Vagina (tissue), 2 donors: ENCODE measurements at regions of chr2 and their contacts with region 1.

Region 1: DNA sequence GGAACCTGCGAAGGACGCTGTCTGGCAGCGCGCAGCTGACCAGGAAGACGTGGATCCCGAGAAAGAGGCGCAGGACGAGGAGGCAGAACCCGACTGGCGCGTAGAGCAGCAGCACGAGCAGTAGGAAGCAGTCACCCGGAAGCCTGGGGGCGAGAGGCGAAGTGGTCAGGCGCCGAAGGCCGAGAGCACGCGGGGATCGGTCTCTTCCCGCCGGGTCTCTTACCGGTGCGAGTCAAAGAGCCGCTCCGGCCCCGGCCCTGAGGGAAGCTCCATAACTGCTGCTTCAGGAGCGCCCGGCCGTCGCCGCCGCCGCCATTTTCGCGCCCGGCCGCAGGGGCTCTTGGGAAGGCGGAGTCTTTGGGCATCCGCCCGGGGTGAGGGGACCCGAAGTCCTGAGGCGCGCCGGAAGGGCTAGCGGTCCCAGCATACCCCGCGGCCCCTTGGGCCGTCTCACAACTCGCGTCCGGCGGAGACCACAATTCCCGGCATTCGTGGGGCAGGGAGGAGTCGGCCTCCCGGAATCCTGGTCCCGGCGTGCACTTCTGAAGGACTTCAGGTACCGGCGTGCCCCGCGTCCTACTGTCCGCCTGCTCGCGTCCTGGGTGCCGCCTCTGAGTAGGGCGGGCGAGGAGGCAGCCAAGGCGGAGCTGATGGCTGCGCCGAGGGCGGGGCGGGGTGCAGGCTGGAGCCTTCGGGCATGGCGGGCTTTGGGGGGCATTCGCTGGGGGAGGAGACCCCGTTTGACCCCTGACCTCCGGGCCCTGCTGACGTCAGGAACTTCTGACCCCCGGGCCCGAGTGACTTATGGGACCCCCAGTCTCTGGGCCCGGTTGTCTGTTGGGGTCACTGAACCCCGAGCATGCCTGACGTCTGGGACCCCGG is at the starts of genes AUP1 and HTRA2:
- DNase-seq: peak in 1 of 2 donors; percentile 99
- H3K4me3 ChIP-seq: peak within 1 kb of the TSS; percentile 87 to 88
- H3K27ac ChIP-seq: peak within 1 kb of the TSS; percentile 85
- H3K4me1 ChIP-seq: peaks cover 33% of the 10 kb centered on the region
- H3K27me3 ChIP-seq: no peaks in the 10 kb centered on the region
- CTCF ChIP-seq: no peak
- POLR2A ChIP-seq: peak in 1 of 2 donors; percentile 64
- total RNA-seq, gene AUP1: 124 TPM
- total RNA-seq, gene HTRA2: 24.3 TPM

Region 2: DNA sequence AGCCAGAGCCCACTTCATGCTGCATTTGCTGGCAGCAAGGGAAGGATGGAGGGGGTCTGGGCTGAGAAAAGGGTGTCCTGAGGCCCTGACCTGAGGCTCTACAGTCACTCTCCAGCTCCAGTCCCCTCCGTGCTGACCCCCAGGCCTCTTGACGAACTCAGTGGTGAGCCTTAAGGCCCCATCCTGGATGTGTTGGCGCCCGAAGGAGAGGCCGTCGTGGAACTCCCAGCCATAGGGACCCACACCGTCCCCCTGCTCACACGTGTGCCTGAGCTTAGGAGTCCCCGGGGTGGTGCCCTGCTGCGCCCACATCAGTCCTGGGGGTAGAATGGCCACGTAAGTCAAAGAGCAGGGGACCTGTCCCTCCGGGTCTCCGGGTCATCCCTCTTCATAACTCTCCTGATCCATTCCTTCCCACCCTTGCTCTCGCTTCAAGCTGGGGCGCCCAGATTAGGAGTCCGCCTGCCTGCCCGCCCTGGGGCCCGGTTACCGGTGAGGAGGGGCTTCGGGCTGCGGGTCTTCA is 65.1 kb before region 1 on chr2:
- intact Hi-C with region 1: loop called (anchors 2 kb)
- DNase-seq: peak in 1 of 2 donors; percentile 85
- H3K4me3 ChIP-seq: peak overlapping the region; percentile 81 to 91
- H3K27ac ChIP-seq: peak overlapping the region; percentile 46
- H3K4me1 ChIP-seq: peaks cover 28% of the 10 kb centered on the region
- H3K27me3 ChIP-seq: no peaks in the 10 kb centered on the region
- CTCF ChIP-seq: no peak
- POLR2A ChIP-seq: no peak

Region 3: DNA sequence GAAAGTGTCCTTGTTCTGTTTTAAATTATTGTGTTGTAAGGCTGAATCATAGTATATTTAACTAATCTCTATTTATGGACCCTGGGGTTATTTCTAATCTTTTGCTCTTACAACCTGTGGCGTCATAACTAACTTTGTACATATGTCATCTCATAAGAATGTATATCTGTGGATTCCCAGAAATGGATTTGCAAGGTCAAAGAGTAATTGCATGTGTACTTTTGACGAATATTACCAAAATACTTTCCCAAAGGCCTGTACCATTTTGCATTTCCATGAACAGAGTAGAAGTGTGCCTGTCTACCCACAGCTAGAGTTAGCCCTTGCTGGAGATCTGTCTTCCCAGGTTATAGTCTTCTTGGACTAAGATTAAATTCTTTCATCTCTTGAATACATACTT is 167.2 kb after region 1 on chr2:
- intact Hi-C with region 1: no loop called
- DNase-seq: no peak
- H3K4me3 ChIP-seq: no peak overlapping the region
- H3K27ac ChIP-seq: no peak overlapping the region
- H3K4me1 ChIP-seq: no peaks in the 10 kb centered on the region
- H3K27me3 ChIP-seq: no peaks in the 10 kb centered on the region
- CTCF ChIP-seq: no peak
- POLR2A ChIP-seq: no peak

Region 4: GRCh38 chr2:75173740-75174139 is 644.1 kb after region 1 on chr2:
- intact Hi-C with region 1: no loop called
- DNase-seq: no peak
- H3K4me3 ChIP-seq: no peak overlapping the region
- H3K27ac ChIP-seq: no peak overlapping the region
- H3K4me1 ChIP-seq: no peaks in the 10 kb centered on the region
- H3K27me3 ChIP-seq: no peaks in the 10 kb centered on the region
- CTCF ChIP-seq: no peak
- POLR2A ChIP-seq: no peak